ENCODE measurements at regions of chr10 and their contacts with region 1.

Region 1: DNA sequence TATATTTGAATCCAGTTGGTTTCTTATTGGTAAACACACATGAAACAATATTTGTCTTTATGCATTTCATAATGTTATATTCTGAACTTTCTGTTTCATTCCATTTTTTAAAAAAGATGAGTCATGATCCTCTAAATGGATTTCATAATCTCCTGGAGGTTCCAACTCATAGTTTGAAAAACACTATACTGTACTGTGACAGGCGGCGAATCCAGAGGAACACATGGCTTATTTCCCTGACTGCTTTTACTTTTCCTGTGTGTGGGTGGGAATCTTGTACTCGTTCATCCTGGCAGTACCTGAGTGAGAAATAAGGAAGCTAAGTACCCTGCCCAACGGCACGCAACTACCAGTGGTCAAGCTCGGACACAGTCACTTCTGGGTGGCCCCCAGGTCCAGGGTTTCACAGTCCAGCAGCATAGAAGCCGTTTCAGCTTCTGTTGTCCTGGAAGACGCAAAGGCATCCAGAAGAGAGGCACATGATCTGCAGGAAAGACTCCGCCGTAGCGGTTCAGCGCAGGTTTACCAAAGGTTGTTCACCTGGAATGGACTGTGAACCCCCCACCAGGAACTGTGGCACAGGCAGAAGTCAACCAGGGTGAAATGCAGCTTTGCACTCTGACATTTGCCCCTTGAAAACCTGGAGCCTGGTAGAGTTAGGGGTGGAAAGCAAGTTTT is 117.7 kb downstream of the CCNY start:
- DNase-seq: peak; percentile 86
- H3K4me3 Mint-ChIP-seq: peak overlapping the region; percentile 69
- H3K27ac Mint-ChIP-seq: peak overlapping the region; percentile 88
- H3K4me1 Mint-ChIP-seq: peaks cover 50% of the 10 kb centered on the region
- H3K27me3 Mint-ChIP-seq: no peaks in the 10 kb centered on the region
- CTCF ChIP-seq: no peak

Region 2: DNA sequence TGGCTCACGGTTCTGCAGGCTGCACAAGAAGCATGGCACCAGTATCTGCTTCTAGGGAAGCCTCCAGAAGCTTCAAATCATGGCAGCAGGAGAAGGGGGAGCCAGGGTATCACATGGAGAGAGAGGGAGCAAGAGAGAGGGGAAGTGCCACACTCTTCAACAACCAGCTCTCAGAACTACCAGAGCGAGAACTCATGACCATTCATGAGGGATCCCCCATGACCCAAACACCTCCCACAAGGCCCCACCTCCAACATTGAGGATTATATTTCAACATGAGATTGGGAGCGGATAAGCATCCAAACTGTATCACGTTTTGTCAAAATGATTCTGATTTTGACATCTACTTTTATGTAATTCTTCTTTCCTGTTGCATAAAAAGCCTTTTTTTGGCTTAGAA is 288.9 kb before region 1 on chr10:
- CTCF ChIA-PET with region 1: no interaction called
- POLR2A ChIA-PET with region 1: no interaction called
- intact Hi-C with region 1: no loop called
- DNase-seq: no peak
- H3K4me3 Mint-ChIP-seq: no peak overlapping the region
- H3K27ac Mint-ChIP-seq: no peak overlapping the region
- H3K4me1 Mint-ChIP-seq: no peaks in the 10 kb centered on the region
- H3K27me3 Mint-ChIP-seq: no peaks in the 10 kb centered on the region
- CTCF ChIP-seq: no peak

Region 3: DNA sequence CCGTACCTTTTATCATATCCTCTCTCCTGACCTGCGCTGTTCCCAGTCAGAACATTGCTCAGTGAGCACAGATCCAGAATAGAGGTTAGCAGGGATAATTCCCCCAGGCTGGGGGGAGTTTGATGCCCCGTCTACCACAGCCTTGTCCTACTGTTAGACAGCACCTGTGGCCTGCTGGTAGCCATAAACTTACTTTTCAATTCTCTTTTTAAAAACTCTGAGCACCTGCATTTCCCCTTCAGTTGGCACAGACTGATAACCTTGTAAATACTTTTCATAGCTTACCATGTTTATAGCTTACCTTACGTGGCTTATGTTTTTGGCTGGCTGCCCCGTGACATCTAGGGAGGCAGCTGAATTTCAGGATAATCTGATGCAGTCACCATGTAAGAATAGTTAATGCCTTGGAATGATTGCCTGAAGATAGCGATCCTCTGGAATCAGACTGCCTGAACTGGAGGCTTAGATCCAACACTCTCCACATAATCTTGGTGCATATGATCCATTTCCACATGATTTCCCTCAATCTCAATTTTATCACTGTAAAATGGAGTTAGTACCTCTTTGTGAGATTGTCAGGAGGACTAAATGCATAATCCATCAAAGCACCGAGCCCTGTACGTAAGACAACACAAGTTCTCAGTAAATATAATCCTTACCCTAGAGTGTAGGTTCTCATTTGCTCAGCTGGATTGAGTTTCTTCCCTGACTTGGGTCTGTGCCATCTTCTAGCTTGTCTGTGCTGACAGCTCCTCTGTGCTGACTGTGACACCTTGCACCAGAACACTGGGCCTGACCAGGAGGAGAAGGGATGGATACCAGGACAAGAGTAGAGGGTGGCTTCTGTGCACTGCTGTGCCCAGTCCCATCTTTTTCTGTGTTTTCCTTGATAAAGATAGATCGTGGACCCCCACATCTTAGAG is 39.5 kb after region 1 on chr10:
- CTCF ChIA-PET with region 1: interaction called, 3 read pairs
- POLR2A ChIA-PET with region 1: interaction called, 15 read pairs
- intact Hi-C with region 1: no loop called
- DNase-seq: peak; percentile 53
- H3K4me3 Mint-ChIP-seq: peak overlapping the region; percentile 35
- H3K27ac Mint-ChIP-seq: peak overlapping the region; percentile 76
- H3K4me1 Mint-ChIP-seq: peaks cover 43% of the 10 kb centered on the region
- H3K27me3 Mint-ChIP-seq: no peaks in the 10 kb centered on the region
- CTCF ChIP-seq: no peak